Activated CD4-positive, alpha-beta memory T cell treated with anti-CD3 and anti-CD28 coated beads for 36 hours (primary cell): ENCODE measurements at regions of chr11 and their contacts with region 1.

Region 1: GRCh38 chr11:75248690-75249268 is 8.2 kb downstream of the TPBGL start:
- DNase-seq: peak; percentile 91
- H3K4me3 Mint-ChIP-seq: no peak overlapping the region
- H3K27ac Mint-ChIP-seq: peak overlapping the region; percentile 1
- H3K4me1 Mint-ChIP-seq: no peaks in the 10 kb centered on the region
- H3K27me3 Mint-ChIP-seq: peaks cover 7% of the 10 kb centered on the region

Region 2: GRCh38 chr11:75022759-75023396 is 225.9 kb before region 1 on chr11:
- CTCF ChIA-PET with region 1: interaction called, 120 read pairs
- POLR2A ChIA-PET with region 1: no interaction called
- intact Hi-C with region 1: loop called (anchors 1 kb)
- DNase-seq: peak; percentile 85
- H3K4me3 Mint-ChIP-seq: no peak overlapping the region
- H3K27ac Mint-ChIP-seq: no peak overlapping the region
- H3K4me1 Mint-ChIP-seq: no peaks in the 10 kb centered on the region
- H3K27me3 Mint-ChIP-seq: no peaks in the 10 kb centered on the region

Region 3: GRCh38 chr11:75163921-75164849 is 84.6 kb before region 1 on chr11:
- CTCF ChIA-PET with region 1: no interaction called
- POLR2A ChIA-PET with region 1: no interaction called
- intact Hi-C with region 1: no loop called
- DNase-seq: no peak
- H3K4me3 Mint-ChIP-seq: no peak overlapping the region
- H3K27ac Mint-ChIP-seq: no peak overlapping the region
- H3K4me1 Mint-ChIP-seq: no peaks in the 10 kb centered on the region
- H3K27me3 Mint-ChIP-seq: no peaks in the 10 kb centered on the region

Region 4: GRCh38 chr11:75204685-75205563 is 43.9 kb before region 1 on chr11:
- CTCF ChIA-PET with region 1: interaction called, 62 read pairs
- POLR2A ChIA-PET with region 1: no interaction called
- intact Hi-C with region 1: no loop called
- DNase-seq: peak; percentile 90
- H3K4me3 Mint-ChIP-seq: no peak overlapping the region
- H3K27ac Mint-ChIP-seq: no peak overlapping the region
- H3K4me1 Mint-ChIP-seq: no peaks in the 10 kb centered on the region
- H3K27me3 Mint-ChIP-seq: no peaks in the 10 kb centered on the region

Region 5: GRCh38 chr11:75214411-75214821 is 34.4 kb before region 1 on chr11:
- CTCF ChIA-PET with region 1: interaction called, 10 read pairs
- POLR2A ChIA-PET with region 1: no interaction called
- intact Hi-C with region 1: no loop called
- DNase-seq: peak; percentile 84
- H3K4me3 Mint-ChIP-seq: no peak overlapping the region
- H3K27ac Mint-ChIP-seq: no peak overlapping the region
- H3K4me1 Mint-ChIP-seq: no peaks in the 10 kb centered on the region
- H3K27me3 Mint-ChIP-seq: peaks cover 20% of the 10 kb centered on the region

Region 6: GRCh38 chr11:75263944-75264349 is 15.2 kb after region 1 on chr11:
- CTCF ChIA-PET with region 1: interaction called, 31 read pairs
- POLR2A ChIA-PET with region 1: no interaction called
- intact Hi-C with region 1: no loop called
- DNase-seq: peak; percentile 49
- H3K4me3 Mint-ChIP-seq: no peak overlapping the region
- H3K27ac Mint-ChIP-seq: no peak overlapping the region
- H3K4me1 Mint-ChIP-seq: peaks cover 42% of the 10 kb centered on the region
- H3K27me3 Mint-ChIP-seq: no peaks in the 10 kb centered on the region

Region 7: GRCh38 chr11:75270896-75271418 is 22.2 kb after region 1 on chr11:
- CTCF ChIA-PET with region 1: interaction called, 28 read pairs
- POLR2A ChIA-PET with region 1: no interaction called
- intact Hi-C with region 1: no loop called
- DNase-seq: no peak
- H3K4me3 Mint-ChIP-seq: no peak overlapping the region
- H3K27ac Mint-ChIP-seq: no peak overlapping the region
- H3K4me1 Mint-ChIP-seq: peaks cover 32% of the 10 kb centered on the region
- H3K27me3 Mint-ChIP-seq: no peaks in the 10 kb centered on the region